ENCODE measurements at regions of chr11 and their contacts with region 1.

Region 1: DNA sequence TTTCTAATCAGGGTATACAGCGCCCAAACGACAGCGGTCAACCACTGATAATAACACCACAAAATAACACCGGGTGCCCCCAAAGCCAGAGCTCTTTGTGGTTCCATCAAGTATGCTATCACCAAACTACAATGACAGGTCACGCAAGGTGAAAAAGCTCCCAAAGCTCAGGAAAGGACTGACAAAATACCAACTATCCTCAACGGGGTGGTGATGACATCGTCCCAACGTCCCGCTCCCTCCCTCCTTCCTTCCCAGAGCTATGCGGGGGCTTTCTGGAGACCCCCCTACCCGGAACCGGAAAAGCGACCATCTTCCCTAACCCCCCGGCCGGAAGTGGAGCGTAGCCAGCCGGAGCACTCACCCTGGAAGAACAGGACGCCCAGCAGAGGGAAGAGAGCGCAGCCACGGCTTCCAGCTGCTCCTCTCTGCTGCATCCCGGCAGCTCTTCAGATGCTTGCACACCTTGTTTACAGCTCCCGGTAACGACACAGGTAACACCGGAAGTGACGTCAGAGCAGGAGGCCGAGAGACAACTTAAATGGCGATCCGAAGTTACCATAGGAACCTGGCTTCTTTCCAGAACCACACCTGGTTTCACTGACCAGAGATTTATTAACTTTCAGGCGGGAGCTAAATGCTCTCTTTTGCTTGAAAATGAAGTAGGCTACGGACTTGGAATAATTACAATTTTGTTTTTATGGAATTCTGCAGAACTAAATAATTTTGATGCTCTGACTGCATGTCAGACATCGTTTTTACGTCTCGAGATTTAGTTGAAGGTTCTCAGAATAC is at the start of gene MPZL3:
- DNase-seq: peak; percentile 71
- H3K4me3 Mint-ChIP-seq: peak within 1 kb of the TSS; percentile 96
- H3K27ac Mint-ChIP-seq: peak within 1 kb of the TSS; percentile 97
- H3K4me1 Mint-ChIP-seq: peaks cover 51% of the 10 kb centered on the region
- H3K27me3 Mint-ChIP-seq: no peaks in the 10 kb centered on the region
- total RNA-seq, gene MPZL3: 63.5 and 69.3 TPM in 2 replicates

Region 2: GRCh38 chr11:118263695-118264567 is 11.9 kb after region 1 on chr11 and contains the start of gene MPZL2:
- intact Hi-C with region 1: loop called (anchors 1 kb)
- DNase-seq: no peak
- H3K4me3 Mint-ChIP-seq: peak within 1 kb of the TSS; percentile 80
- H3K27ac Mint-ChIP-seq: peak within 1 kb of the TSS; percentile 41
- H3K4me1 Mint-ChIP-seq: peaks cover 58% of the 10 kb centered on the region
- H3K27me3 Mint-ChIP-seq: peaks cover 6% of the 10 kb centered on the region
- total RNA-seq, gene MPZL2: 13.2 and 15.9 TPM in 2 replicates

Region 3: DNA sequence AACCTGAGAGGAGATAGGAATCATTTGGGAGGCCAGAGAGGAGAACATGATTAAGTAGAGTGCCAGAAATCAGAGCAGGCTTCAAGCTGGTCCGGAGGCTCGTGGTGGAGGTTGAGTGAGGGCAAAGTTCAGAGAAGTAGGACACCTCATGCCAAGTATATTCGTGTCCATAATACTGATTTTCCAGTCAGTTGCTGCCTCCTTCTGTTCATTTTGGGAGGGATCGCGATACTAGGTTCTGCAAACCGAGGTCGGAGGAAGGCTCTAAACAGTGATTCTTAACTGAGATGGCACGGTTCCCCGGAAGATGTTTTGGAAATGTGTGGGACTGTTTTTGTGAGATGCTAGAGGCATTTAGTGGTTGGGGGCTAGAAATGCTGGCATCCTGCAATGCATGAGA is 38.9 kb after region 1 on chr11:
- intact Hi-C with region 1: loop called (anchors 2 kb)
- DNase-seq: peak; percentile 40
- H3K4me3 Mint-ChIP-seq: no peak overlapping the region
- H3K27ac Mint-ChIP-seq: peak overlapping the region; percentile 15
- H3K4me1 Mint-ChIP-seq: peaks cover 29% of the 10 kb centered on the region
- H3K27me3 Mint-ChIP-seq: peaks cover 2% of the 10 kb centered on the region

Region 4: GRCh38 chr11:118338637-118339061 is 86.6 kb after region 1 on chr11:
- intact Hi-C with region 1: loop called (anchors 1 kb)
- DNase-seq: peak; percentile 86
- H3K4me3 Mint-ChIP-seq: peak overlapping the region; percentile 90
- H3K27ac Mint-ChIP-seq: peak overlapping the region; percentile 99
- H3K4me1 Mint-ChIP-seq: peaks cover 68% of the 10 kb centered on the region
- H3K27me3 Mint-ChIP-seq: no peaks in the 10 kb centered on the region

Region 5: DNA sequence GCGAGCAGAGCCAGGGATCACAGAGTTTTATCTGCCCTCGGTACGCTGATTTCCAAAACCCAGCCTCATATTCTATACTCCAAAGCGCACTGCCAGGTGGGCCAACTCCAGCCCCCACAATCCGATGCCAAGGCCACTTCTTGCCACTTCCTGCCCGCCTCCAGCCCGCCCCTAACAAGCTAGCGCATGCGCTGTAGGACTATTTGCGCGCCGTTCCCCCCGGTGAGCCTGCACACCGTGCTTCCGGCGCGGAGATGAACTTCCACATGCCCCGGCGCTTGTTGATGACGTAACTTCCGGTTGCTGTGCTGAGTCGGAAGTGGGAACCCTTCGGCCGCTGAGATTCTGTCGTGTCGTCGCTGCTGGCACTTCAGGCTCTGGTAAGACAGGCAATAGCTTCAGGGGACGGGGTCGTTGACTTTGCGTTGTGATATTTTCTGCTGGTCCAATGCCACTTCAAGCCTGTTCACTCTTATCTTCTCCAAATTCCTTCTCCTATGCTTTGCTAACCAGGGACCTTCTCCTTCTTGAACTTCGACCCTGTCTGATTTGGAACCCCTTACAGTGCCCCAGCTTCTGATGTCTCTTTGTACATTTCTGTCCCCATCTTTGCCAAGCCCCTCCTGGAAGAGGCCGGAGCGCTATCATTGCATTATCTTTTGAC is 107.4 kb after region 1 on chr11 and contains the start of gene UBE4A:
- intact Hi-C with region 1: loop called (anchors 2 kb)
- DNase-seq: peak; percentile 94
- H3K4me3 Mint-ChIP-seq: peak within 1 kb of the TSS; percentile 95
- H3K27ac Mint-ChIP-seq: peak within 1 kb of the TSS; percentile 89
- H3K4me1 Mint-ChIP-seq: peaks cover 39% of the 10 kb centered on the region
- H3K27me3 Mint-ChIP-seq: no peaks in the 10 kb centered on the region
- total RNA-seq, gene UBE4A: 44.1 and 46.0 TPM in 2 replicates